GM13976 (cell line): ENCODE measurements at regions of chr1 and their contacts with region 1.

Region 1: DNA sequence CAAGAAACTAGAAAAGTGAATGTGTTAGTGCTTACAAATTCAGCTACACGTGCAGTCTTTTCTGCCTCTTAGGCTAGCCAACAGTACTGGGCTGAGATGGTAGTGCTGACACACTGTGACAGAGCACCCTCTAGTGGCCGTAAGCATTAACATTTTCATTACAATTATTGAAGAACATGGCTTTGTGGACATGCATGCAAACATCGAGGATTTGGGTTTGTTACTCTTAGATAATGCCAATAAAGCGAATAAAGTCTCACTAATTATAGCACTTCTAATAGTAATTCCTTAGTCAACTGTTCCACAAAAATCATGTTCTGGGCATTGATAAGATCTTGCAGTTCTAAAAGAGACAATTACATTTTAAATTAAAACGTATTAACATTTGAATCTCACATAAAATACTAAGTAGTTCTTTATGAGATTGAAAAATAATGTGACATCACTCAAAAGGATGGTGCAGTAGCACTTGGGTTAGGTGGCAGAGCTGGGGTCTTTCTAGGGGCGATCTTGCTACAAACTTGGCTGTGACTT is 47.1 kb downstream of the MYSM1 start:
- DNase-seq: peak; percentile 61
- CTCF ChIP-seq: peak; percentile 63

Region 2: GRCh38 chr1:58524353-58524945 is 128.3 kb before region 1 on chr1:
- in situ Hi-C with region 1: loop called (anchors 5 kb)
- DNase-seq: no peak
- CTCF ChIP-seq: no peak